Psoas muscle (tissue), 8 donors: ENCODE measurements at regions of chr17 and their contacts with region 1.

Region 1: GRCh38 chr17:34961093-34961911 is at the starts of genes CCT6B and ZNF830:
- DNase-seq: peak; percentile 92 to 95
- ATAC-seq: peak; percentile 97 to 99 (median 99)
- H3K4me3 ChIP-seq: peak within 1 kb of the TSS; percentile 95
- H3K27ac ChIP-seq: peak within 1 kb of the TSS; percentile 97
- H3K4me1 ChIP-seq: peaks cover 16% of the 10 kb centered on the region
- H3K27me3 ChIP-seq: no peaks in the 10 kb centered on the region
- CTCF ChIP-seq: no peak
- total RNA-seq, gene CCT6B: 2.4 to 5.2 (median 3.3) TPM
- total RNA-seq, gene ZNF830: 7.0 to 12.6 (median 10.6) TPM

Region 2: DNA sequence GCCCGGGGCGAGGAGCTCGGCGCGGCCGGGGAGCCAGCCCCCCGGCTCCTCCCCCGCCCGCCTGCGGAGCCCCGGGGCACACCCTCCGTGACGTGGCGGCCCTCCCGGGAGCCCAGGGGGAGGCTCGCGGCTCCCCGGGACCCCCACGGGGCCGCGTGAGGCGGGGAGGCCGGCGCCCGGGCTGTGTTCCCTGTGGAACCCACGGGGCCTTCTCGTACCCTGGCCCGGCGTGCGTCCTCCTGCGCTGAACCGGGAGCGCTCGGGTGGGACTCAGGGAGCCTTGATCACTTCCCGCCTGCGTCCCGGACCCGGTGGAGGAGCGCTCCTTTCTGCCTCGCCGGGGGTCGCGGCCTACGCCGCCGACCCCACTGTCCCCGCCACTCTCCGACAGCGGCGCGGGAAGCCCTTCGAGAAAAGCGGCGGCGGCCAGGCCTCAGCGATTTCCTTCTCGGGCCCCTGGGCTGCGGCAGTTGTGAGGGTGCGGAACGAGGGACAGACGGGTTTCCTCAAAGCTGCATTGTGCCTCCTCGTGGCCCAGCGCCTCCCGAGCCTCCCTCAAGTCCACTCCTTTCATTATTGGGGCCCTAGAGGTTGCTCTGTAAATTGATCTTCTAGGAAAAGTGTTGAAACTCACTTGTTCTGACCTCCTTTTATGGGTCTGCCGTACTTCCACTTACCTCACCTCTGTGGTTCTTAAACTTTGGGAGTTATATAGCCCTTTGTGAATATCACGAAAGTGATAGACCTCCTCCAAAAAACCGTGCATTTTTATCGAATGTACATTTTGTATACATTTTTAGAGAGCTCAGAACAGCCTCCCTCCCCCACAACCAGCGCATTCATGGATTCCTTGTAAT is 19.6 kb after region 1 on chr17:
- intact Hi-C with region 1: loop called in 1 of 2 experiments (anchors 1 kb)
- DNase-seq: peak; percentile 82 to 84
- ATAC-seq: peak; percentile 85 to 89 (median 87)
- H3K4me3 ChIP-seq: peak overlapping the region; percentile 98
- H3K27ac ChIP-seq: peak overlapping the region; percentile 99
- H3K4me1 ChIP-seq: peaks cover 25% of the 10 kb centered on the region
- H3K27me3 ChIP-seq: no peaks in the 10 kb centered on the region
- CTCF ChIP-seq: peak; percentile 17